Endothelial cell of umbilical vein (primary cell): ENCODE measurements at regions of chr14 and their contacts with region 1.

Region 1: GRCh38 chr14:80664576-80664975 is 277.0 kb downstream of the CEP128 start:
- DNase-seq: peak; percentile 49
- H3K4me3 ChIP-seq: no peak overlapping the region
- H3K27ac ChIP-seq: peak overlapping the region; percentile 24
- H3K4me1 ChIP-seq: peaks cover 15% of the 10 kb centered on the region
- H3K27me3 ChIP-seq: no peaks in the 10 kb centered on the region
- CTCF ChIP-seq: no peak
- POLR2A ChIP-seq: no peak

Region 2: DNA sequence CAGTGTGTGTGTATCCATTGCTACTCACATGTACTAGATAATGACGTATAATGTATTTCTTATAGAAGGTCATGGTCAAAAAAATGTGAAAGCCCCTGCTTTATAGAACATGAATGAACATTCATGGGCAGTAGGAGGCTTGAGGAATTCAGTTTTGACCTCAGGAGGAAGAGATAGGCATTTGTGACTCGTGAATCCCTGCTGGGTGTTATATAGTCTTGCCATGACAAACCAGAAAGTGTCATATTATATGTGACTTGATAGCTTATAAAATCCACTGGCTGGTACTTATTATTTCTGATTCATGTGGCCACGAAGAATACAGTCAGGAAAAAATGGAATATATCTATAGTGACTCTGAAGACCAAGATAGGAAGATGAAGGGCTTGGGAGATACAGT is 10.6 kb before region 1 on chr14:
- CTCF ChIA-PET with region 1: no interaction called
- POLR2A ChIA-PET with region 1: no interaction called
- dilution Hi-C with region 1: no loop called
- intact Hi-C with region 1: no loop called
- DNase-seq: no peak
- H3K4me3 ChIP-seq: no peak overlapping the region
- H3K27ac ChIP-seq: no peak overlapping the region
- H3K4me1 ChIP-seq: peaks cover 6% of the 10 kb centered on the region
- H3K27me3 ChIP-seq: no peaks in the 10 kb centered on the region
- CTCF ChIP-seq: no peak
- POLR2A ChIP-seq: no peak

Region 3: GRCh38 chr14:80699861-80700260 is 35.3 kb after region 1 on chr14:
- CTCF ChIA-PET with region 1: no interaction called
- POLR2A ChIA-PET with region 1: no interaction called
- dilution Hi-C with region 1: no loop called
- intact Hi-C with region 1: loop called (anchors 2 kb)
- DNase-seq: no peak
- H3K4me3 ChIP-seq: no peak overlapping the region
- H3K27ac ChIP-seq: no peak overlapping the region
- H3K4me1 ChIP-seq: no peaks in the 10 kb centered on the region
- H3K27me3 ChIP-seq: no peaks in the 10 kb centered on the region
- CTCF ChIP-seq: no peak
- POLR2A ChIP-seq: no peak